ENCODE measurements at regions of chr2 and their contacts with region 1.

Region 1: GRCh38 chr2:178761759-178762371 is 45.4 kb downstream of the TTN start:
- DNase-seq: peak; percentile 46 to 75
- H3K4me3 ChIP-seq: no peak overlapping the region
- H3K27ac ChIP-seq: no peak overlapping the region
- H3K4me1 ChIP-seq: peaks cover 11% of the 10 kb centered on the region
- H3K27me3 ChIP-seq: no peaks in the 10 kb centered on the region
- CTCF ChIP-seq: peak; percentile 98

Region 2: DNA sequence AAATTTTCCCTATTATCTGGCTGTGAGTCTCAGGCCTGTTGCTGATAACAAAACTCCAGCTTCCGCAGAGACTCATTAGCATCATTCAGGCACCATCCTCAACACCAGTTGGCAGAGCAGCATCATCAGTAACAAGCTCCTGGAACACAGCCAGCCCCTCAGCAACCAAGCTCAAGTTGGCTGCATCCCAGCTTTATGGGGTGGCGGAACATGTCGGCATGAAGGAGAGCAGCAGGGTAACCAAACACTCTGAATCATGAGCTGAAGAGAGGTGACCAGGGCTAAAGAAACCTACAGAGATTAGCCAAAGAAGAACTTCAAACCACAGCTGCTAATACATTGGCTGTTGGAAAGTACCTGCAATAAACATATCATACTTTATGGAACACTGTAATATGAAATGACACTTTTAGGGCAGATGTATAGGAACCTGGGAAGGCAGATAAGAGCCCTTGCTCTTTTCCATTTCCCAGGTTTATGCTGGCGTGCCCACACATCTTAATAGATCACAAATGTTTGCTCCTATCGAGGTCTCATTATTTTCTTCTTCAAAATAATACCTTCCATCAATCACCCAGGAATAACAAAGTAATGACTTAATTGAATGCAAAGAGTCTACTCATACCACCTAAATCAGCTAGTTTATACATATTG is 753.1 kb before region 1 on chr2:
- CTCF ChIA-PET with region 1: no interaction called
- POLR2A ChIA-PET with region 1: no interaction called
- intact Hi-C with region 1: no loop called
- DNase-seq: peak in 1 of 2 experiments; percentile 31
- H3K4me3 ChIP-seq: no peak overlapping the region
- H3K27ac ChIP-seq: no peak overlapping the region
- H3K4me1 ChIP-seq: no peaks in the 10 kb centered on the region
- H3K27me3 ChIP-seq: no peaks in the 10 kb centered on the region
- CTCF ChIP-seq: no peak

Region 3: DNA sequence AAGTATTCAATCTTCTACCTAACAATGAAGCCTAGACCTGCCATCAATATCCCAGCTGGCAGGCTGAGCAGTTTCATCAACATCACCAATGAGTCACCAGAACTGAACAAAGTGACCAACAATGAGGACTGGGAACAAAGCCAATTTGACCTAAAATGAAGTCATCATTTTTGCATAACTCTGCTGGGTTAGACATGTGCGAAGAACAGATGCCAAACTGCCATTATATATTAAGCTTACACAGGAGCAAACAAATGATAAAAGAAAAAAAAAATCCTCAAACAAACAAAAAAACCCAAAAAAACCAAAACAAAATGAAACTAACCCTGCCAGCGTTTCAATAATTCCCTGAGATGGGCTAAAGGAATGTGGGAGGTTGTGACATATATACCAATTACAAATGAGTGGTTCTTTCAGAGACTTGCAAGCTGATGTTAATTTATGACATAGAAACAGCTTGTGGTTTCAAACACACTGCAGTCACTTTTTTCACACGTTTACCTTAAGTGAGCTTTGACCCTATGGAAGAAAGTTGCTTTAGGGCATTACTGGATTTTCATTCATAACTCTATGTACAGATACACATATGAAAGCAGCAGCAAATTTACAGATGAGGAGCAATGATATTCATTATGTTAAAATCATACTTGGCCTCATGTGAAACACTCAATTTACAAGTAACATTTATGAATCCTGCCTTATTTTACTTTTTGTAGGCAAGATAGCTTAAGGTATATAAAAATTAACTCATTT is 345.0 kb after region 1 on chr2:
- CTCF ChIA-PET with region 1: no interaction called
- POLR2A ChIA-PET with region 1: no interaction called
- intact Hi-C with region 1: loop called (anchors 10 kb)
- DNase-seq: peak; percentile 63 to 91
- H3K4me3 ChIP-seq: no peak overlapping the region
- H3K27ac ChIP-seq: no peak overlapping the region
- H3K4me1 ChIP-seq: peaks cover 18% of the 10 kb centered on the region
- H3K27me3 ChIP-seq: no peaks in the 10 kb centered on the region
- CTCF ChIP-seq: no peak

Region 4: DNA sequence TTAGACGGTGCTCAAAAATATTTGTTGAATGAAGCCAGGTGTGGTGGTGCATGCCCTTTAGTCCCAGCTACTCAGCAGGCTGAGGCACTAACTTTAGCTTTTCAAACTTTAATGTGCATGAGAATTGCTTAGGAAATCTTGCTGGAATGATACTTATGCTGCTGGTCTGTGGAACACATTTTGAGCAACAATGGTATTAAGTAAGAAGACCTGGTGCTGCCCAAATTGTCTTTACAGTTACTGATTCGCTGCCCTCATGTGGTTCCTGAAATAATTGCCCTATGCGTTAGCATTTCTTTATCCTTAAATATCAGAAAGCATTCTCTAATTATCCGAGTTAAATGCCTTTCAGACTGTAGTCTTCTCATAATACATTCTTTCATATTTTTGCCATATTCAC is 578.8 kb after region 1 on chr2:
- CTCF ChIA-PET with region 1: no interaction called
- POLR2A ChIA-PET with region 1: no interaction called
- intact Hi-C with region 1: loop called (anchors 5 kb)
- DNase-seq: peak in 1 of 2 experiments; percentile 35
- H3K4me3 ChIP-seq: no peak overlapping the region
- H3K27ac ChIP-seq: no peak overlapping the region
- H3K4me1 ChIP-seq: peaks cover 22% of the 10 kb centered on the region
- H3K27me3 ChIP-seq: no peaks in the 10 kb centered on the region
- CTCF ChIP-seq: peak; percentile 72

Region 5: GRCh38 chr2:180077295-180077906 is 1315.5 kb after region 1 on chr2:
- CTCF ChIA-PET with region 1: interaction called, 3 read pairs
- POLR2A ChIA-PET with region 1: no interaction called
- intact Hi-C with region 1: loop called (anchors 5 kb)
- DNase-seq: no peak
- H3K4me3 ChIP-seq: no peak overlapping the region
- H3K27ac ChIP-seq: no peak overlapping the region
- H3K4me1 ChIP-seq: no peaks in the 10 kb centered on the region
- H3K27me3 ChIP-seq: no peaks in the 10 kb centered on the region
- CTCF ChIP-seq: peak; percentile 95

Measured in PC-9 (cell line).